ENCODE measurements at regions of chr2 and their contacts with region 1.

Region 1: DNA sequence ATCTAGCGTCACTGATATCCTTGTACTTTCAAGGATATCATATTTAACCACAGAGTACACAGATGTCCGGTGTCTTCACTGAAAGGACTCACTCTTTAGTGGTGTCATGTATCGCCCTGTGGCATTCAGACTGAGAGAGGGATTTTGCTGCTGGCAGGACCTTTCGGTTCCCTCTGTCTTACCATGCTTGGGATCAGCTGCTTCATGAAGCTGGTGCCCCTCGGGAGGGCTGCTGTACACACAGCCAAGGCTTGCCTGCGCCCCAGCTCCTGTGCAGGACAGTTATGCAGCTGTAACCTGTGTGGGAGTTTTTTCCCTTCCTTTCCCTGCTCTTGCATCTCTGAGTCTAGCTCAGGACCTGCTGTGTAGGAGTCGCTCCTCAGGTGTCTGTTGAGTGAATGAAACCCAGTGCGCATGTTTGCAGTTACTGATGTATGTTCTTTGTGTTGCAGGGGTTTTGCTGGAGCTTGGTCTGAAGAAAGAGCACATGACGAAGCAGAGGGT is 64.4 kb downstream of the GREB1 start:
- DNase-seq: no peak
- H3K4me3 ChIP-seq: no peak overlapping the region
- H3K27ac ChIP-seq: no peak overlapping the region
- H3K4me1 ChIP-seq: no peaks in the 10 kb centered on the region
- H3K27me3 ChIP-seq: no peaks in the 10 kb centered on the region
- CTCF ChIP-seq: no peak
- EP300 ChIP-seq: no peak
- POLR2A ChIP-seq: no peak

Region 2: DNA sequence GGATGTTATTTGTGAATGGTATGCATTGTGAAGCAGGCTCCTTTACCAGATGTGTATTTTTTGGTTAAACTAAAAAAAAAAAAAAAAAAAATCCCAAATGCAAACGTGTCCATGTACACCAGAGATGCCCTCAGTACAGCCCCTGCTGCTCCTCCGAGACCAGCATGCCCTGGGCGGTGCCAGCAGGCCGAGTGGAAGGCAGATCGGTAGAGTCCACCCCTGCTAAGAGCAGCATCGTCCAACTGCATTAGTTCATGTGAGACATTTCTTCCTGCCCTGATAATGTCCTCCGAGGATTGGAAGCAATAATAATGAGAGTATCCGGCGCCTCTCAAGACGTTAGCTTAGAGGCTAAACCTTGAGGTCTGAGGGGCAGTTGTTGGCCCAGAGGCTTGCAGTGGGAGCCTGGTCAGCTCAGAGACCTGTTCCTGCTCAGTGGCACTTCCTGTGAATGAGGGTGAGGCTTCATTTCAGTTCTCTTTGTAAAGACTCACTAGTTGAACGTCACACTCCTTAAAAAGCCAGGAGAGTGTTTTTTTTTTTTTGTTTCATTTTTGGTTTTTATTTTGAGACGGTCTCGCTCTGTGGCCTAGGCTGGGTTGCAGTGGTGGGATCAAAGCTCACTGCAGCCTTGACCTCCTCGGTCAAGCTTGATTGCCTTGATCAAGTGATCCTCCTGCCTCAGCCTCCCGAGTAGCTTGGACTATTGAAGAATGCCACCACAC is 437.4 kb before region 1 on chr2:
- intact Hi-C with region 1: loop called in 1 of 4 experiments (anchors 10 kb)
- DNase-seq: no peak
- H3K4me3 ChIP-seq: no peak overlapping the region
- H3K27ac ChIP-seq: no peak overlapping the region
- H3K4me1 ChIP-seq: peaks cover under 1% of the 10 kb centered on the region
- H3K27me3 ChIP-seq: no peaks in the 10 kb centered on the region
- CTCF ChIP-seq: no peak
- EP300 ChIP-seq: no peak
- POLR2A ChIP-seq: no peak

Region 3: DNA sequence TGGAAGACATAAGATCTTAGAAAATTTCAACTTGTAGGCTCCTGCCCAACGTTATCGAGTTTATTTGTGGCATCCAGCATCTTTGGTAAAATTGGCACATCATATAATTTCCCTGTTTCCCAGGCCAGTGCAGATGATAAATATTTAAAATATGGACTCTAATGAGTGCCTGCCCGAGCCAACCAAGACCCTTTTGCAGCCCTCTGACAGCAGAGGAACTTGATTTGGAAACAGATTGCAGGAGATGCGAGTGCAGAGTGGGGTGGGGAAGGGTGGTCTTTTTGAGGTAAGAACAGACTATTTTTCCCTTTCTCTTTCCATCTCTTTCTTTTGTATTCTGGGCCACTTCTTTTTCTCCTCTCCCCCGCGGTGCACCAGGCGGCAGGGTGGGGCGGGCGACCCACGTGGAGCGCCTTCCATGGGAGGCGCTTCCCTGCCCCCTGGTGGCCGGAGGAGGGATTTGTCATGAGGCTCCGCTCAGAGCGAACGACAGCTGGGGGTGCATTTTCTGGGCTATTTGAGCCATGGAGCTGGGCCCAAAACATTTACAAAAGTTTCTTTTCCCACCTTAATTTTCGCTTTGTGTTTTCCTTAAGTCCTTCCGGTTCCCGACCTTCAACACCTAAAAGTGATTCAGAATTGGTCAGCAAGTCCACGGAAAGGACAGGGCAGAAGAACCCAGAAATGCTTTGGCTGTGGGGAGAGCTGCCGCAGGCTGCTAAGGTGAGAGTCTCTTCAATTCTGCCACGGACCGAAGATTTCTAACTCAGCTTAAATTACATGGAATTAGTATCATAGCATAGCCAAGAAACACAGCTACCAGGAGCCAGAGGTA is 180.9 kb after region 1 on chr2:
- intact Hi-C with region 1: loop called in 1 of 4 experiments (anchors 10 kb)
- DNase-seq: peak; percentile 80 to 90 (median 88)
- H3K4me3 ChIP-seq: no peak overlapping the region
- H3K27ac ChIP-seq: no peak overlapping the region
- H3K4me1 ChIP-seq: no peaks in the 10 kb centered on the region
- H3K27me3 ChIP-seq: no peaks in the 10 kb centered on the region
- CTCF ChIP-seq: peak; percentile 89 to 98 (median 97)
- EP300 ChIP-seq: no peak
- POLR2A ChIP-seq: no peak